CD4-positive, alpha-beta memory T cell (primary cell): ENCODE measurements at regions of chr6 and their contacts with region 1.

Region 1: DNA sequence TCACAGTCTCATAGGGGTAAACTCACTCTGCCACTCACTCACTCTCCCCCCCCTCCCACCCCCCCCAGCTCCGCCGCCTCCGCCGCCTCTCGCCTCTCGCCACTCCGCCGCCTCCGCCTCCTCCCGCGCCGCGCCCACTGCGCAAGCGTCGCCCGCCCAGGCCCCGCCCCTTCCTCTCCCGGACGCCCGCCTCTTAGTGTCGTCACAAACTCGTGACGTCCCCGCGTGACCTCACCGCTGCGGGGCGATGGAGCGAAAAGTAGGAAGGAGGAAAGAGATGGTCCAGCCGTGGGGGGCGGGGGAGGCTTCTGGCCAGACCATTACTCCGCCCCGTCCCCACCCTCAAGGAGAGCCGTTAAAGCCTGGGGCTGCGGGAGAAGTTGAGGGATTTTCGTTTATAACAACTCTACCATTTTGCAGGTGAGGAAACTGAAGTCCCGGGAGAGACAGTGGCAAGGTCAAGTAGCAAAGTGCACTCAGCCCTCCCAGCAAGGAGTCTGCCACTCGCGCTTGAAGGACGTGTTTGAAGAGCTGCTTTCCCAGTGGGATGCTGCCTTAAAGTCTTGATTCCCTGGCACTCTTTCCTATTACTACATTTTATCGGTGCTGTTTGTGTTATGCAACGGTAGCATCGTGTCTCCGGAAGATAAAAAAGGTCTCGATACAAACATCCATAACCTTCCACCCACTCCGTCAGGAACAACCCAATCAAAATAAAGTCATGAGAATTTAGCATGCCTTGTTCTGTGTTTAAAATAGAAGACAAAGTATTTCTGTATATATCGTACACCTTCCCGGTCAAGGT is at the start of gene ILRUN:
- DNase-seq: peak; percentile 92 to 96 (median 93)
- H3K4me3 ChIP-seq: peak within 1 kb of the TSS; percentile 96 to 97
- H3K4me3 Mint-ChIP-seq: peak within 1 kb of the TSS; percentile 95 to 100 (median 98)
- H3K27ac ChIP-seq: peak within 1 kb of the TSS; percentile 98
- H3K27ac Mint-ChIP-seq: peak within 1 kb of the TSS; percentile 93 to 100 (median 100)
- H3K4me1 ChIP-seq: peaks cover 48% of the 10 kb centered on the region
- H3K4me1 Mint-ChIP-seq: peaks cover 32 to 57% (median 45%) of the 10 kb centered on the region in 4 donors
- H3K27me3 ChIP-seq: no peaks in the 10 kb centered on the region
- H3K27me3 Mint-ChIP-seq: peaks cover 0 to 2% of the 10 kb centered on the region in 2 donors
- total RNA-seq, gene ILRUN: 68.6 to 70.7 TPM

Region 2: GRCh38 chr6:34526992-34527728 is 169.8 kb before region 1 on chr6:
- CTCF ChIA-PET with region 1: no interaction called
- POLR2A ChIA-PET with region 1: no interaction called
- intact Hi-C with region 1: loop called (anchors 1 kb)
- DNase-seq: peak; percentile 93 to 94 (median 93)
- H3K4me3 ChIP-seq: peak overlapping the region in 1 of 2 donors; percentile 20
- H3K4me3 Mint-ChIP-seq: peak overlapping the region in 6 of 8 donors; percentile 57 to 70 (median 64)
- H3K27ac ChIP-seq: no peak overlapping the region
- H3K27ac Mint-ChIP-seq: peak overlapping the region; percentile 27 to 78 (median 68)
- H3K4me1 ChIP-seq: peaks cover 15% of the 10 kb centered on the region
- H3K4me1 Mint-ChIP-seq: peaks cover 5 to 17% (median 7%) of the 10 kb centered on the region in 4 donors
- H3K27me3 ChIP-seq: no peaks in the 10 kb centered on the region
- H3K27me3 Mint-ChIP-seq: no peaks in the 10 kb centered on the region

Region 3: DNA sequence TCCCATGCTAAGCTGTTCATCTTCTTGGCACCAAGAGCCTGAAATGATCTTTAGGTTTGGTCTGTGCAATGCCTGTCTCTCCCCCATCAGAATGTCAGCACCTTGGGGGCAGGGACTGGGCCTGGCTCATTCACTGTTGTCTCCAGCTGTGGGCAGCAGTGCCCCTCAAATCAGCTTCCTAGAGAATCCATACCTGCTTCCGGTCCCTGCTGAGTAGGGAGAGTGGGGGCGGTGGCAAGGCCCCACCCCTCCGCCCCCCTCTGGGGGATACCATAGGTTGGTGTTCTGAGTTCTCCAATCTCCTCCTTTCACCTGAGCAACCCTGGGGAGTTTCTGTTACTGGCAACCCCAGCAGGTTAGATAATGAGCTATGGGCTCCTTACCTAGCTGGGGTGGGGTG is 121.6 kb before region 1 on chr6:
- CTCF ChIA-PET with region 1: no interaction called
- POLR2A ChIA-PET with region 1: no interaction called
- intact Hi-C with region 1: no loop called
- DNase-seq: no peak
- H3K4me3 ChIP-seq: no peak overlapping the region
- H3K4me3 Mint-ChIP-seq: no peak overlapping the region
- H3K27ac ChIP-seq: no peak overlapping the region
- H3K27ac Mint-ChIP-seq: peak overlapping the region in 2 of 7 donors; percentile 37 to 51
- H3K4me1 ChIP-seq: no peaks in the 10 kb centered on the region
- H3K4me1 Mint-ChIP-seq: peaks cover 0 to 7% (median 4%) of the 10 kb centered on the region in 4 donors
- H3K27me3 ChIP-seq: no peaks in the 10 kb centered on the region
- H3K27me3 Mint-ChIP-seq: peaks cover 0 to 5% of the 10 kb centered on the region in 2 donors

Region 4: GRCh38 chr6:34656378-34657036 is 40.4 kb before region 1 on chr6:
- CTCF ChIA-PET with region 1: interaction called, 4 read pairs
- POLR2A ChIA-PET with region 1: interaction called, 44 read pairs
- intact Hi-C with region 1: loop called (anchors 5 kb)
- DNase-seq: peak; percentile 26 to 72 (median 33)
- H3K4me3 ChIP-seq: peak overlapping the region; percentile 34 to 37
- H3K4me3 Mint-ChIP-seq: peak overlapping the region; percentile 83 to 96 (median 89)
- H3K27ac ChIP-seq: peak overlapping the region; percentile 67
- H3K27ac Mint-ChIP-seq: peak overlapping the region; percentile 90 to 98 (median 94)
- H3K4me1 ChIP-seq: peaks cover 73% of the 10 kb centered on the region
- H3K4me1 Mint-ChIP-seq: peaks cover 34 to 65% (median 50%) of the 10 kb centered on the region in 4 donors
- H3K27me3 ChIP-seq: no peaks in the 10 kb centered on the region
- H3K27me3 Mint-ChIP-seq: no peaks in the 10 kb centered on the region